Activated CD4-positive, alpha-beta memory T cell treated with anti-CD3 and anti-CD28 coated beads for 36 hours (primary cell): ENCODE measurements at regions of chr11 and their contacts with region 1.

Region 1: DNA sequence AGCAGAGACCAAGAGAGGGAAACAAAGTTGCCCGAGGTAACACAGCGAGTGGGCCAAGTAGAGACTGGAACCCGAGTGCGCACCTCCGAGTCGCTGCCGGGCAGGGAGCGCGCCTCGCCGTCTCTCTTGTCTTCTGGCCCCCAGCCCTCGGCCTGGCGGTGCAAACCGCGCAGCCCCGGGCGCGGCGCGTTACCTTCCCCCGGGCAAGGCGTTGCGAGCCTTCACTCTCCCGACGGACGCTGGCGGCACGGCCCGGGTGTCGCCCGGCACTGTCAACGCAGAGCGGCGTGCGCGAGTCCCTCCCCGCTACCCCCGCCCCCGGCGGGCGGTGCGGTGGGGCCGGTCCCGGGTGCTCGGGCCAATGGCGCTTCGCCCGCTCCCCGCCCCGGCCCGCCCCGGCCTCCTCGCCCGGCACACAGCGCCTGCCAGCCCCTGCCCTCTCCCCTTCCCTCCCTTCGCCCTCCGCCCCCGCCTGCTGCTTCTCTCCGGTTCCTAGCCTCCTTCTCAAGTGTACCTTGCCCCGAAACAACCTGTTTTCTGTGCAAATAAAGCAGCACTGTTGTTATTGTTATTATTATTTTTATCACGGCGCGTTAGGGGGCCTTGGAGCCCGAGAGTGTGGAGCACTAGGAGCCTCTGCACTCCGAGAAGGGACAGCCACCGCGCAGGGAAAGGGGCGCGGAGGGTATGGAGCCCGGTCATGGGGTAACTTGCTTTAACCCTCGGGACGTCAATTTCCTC is at the start of gene SYTL2:
- DNase-seq: peak; percentile 82
- H3K4me3 Mint-ChIP-seq: peak within 1 kb of the TSS; percentile 75
- H3K27ac Mint-ChIP-seq: peak within 1 kb of the TSS; percentile 42
- H3K4me1 Mint-ChIP-seq: peaks cover 28% of the 10 kb centered on the region
- H3K27me3 Mint-ChIP-seq: peaks cover 3% of the 10 kb centered on the region
- total RNA-seq, gene SYTL2: 10.2 TPM

Region 2: GRCh38 chr11:85699957-85700741 is 110.9 kb before region 1 on chr11:
- CTCF ChIA-PET with region 1: interaction called, 9 read pairs
- POLR2A ChIA-PET with region 1: no interaction called
- intact Hi-C with region 1: loop called (anchors 1 kb)
- DNase-seq: no peak
- H3K4me3 Mint-ChIP-seq: no peak overlapping the region
- H3K27ac Mint-ChIP-seq: peak overlapping the region; percentile 63
- H3K4me1 Mint-ChIP-seq: peaks cover 34% of the 10 kb centered on the region
- H3K27me3 Mint-ChIP-seq: no peaks in the 10 kb centered on the region

Region 3: GRCh38 chr11:85759915-85760314 is 51.1 kb before region 1 on chr11:
- CTCF ChIA-PET with region 1: no interaction called
- POLR2A ChIA-PET with region 1: no interaction called
- intact Hi-C with region 1: no loop called
- DNase-seq: no peak
- H3K4me3 Mint-ChIP-seq: no peak overlapping the region
- H3K27ac Mint-ChIP-seq: no peak overlapping the region
- H3K4me1 Mint-ChIP-seq: peaks cover 64% of the 10 kb centered on the region
- H3K27me3 Mint-ChIP-seq: no peaks in the 10 kb centered on the region